Ascending aorta (tissue), 2 donors: ENCODE measurements at regions of chr14 and their contacts with region 1.

Region 1: DNA sequence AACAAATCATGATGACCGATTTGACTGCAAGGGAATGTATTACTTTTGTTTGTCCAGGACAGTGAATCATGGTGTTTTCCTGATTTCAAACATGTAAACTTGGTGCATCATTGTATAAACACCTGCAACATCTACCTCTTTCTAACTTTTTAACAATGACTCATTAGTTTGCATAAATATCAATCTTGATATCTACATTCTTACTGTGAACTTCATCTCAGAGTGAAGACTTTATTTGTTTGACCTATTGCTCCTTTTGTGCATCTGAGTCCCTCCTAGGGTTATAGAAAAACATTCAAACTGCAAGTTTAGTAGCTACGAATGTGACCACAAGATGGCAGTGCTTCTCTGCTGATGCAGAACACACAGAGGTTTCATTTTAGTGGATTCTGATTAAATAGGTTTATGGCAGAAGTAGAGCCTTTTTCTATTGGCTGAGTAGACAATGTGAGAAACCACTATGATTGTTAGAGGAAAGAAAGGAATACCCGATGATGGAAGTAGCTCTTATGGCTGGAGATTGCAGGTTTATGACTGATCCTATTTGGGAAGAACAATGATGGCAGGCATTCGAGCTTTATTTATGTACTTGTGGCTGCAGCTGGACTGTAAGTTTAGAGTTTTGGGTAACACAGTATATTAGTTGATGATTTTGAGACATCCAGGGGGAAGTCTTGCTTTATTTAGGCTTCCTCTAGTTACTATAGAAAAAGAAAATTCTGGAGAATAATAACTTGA is 244.2 kb upstream of the OR4E1 start:
- DNase-seq: no peak
- H3K4me3 ChIP-seq: peak overlapping the region in 1 of 2 donors; percentile 9
- H3K27ac ChIP-seq: no peak overlapping the region
- H3K4me1 ChIP-seq: peaks cover 0 to 6% of the 10 kb centered on the region in 2 donors
- H3K27me3 ChIP-seq: no peaks in the 10 kb centered on the region
- CTCF ChIP-seq: peak in 2 of 3 experiments; percentile 52 to 61

Region 2: GRCh38 chr14:22099942-22100763 is 182.3 kb after region 1 on chr14:
- intact Hi-C with region 1: loop called (anchors 10 kb)
- DNase-seq: peak in 1 of 2 donors; percentile 66
- H3K4me3 ChIP-seq: no peak overlapping the region
- H3K27ac ChIP-seq: no peak overlapping the region
- H3K4me1 ChIP-seq: no peaks in the 10 kb centered on the region
- H3K27me3 ChIP-seq: no peaks in the 10 kb centered on the region
- CTCF ChIP-seq: peak; percentile 13 to 32 (median 26)